Posterior cingulate gyrus (tissue), 11 donors: ENCODE measurements at regions of chr15 and their contacts with region 1.

Region 1: DNA sequence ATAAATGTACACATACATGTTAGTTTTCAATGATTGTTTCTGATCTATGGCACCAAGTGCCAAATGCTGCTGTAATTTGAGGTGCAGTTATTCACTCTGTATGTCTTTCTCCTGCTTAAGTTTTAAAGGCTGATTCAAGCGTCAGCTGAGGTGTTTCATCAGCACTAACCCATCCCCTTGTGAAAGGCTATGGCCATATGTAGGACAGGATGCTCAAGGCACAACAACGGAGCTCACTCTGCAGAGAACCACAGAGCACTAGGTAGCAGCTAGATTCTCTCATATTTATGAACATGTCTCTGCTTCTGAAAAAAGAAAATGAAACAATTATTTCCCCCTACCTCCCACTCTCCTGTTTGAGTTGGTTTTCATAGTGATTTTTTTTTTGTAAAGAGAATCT is 340.0 kb upstream of the TMCO5A start:
- DNase-seq: no peak

Region 2: GRCh38 chr15:37652646-37653417 is 58.4 kb after region 1 on chr15:
- intact Hi-C with region 1: loop called (anchors 10 kb)
- DNase-seq: no peak

Region 3: DNA sequence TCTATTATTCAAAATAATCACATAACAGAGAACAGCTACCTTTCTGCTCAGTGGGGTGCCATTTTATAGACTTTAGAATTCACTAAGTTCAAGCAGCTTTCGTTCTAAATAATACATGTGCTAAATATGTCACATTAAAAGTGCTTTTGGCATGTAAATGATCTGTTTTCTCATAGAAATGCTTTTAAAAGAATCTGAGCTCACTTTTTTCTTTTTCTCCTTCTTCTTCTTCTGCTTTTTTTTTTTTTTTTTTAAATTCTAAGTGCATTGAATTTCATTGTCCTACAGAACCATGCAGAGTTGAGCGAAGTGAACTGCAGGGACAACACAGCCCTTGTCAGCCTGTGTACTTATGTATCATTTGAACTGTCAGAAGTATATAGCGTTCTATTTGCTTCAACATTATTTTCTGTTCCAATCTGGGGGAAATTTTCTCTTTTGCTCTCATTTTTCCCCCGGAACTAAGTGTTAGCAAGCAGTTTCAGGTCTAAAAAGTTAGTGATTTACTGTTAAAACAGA is 146.3 kb after region 1 on chr15:
- intact Hi-C with region 1: no loop called
- DNase-seq: no peak